Pancreas (tissue), 10 donors: ENCODE measurements at regions of chr3 and their contacts with region 1.

Region 1: GRCh38 chr3:143885780-143886427 is 37.6 kb upstream of the SLC9A9 start:
- DNase-seq: peak in 1 of 6 donors; percentile 25
- ATAC-seq: peak in 3 of 4 donors; percentile 73 to 78 (median 78)
- H3K4me3 ChIP-seq: no peak overlapping the region
- H3K27ac ChIP-seq: no peak overlapping the region
- H3K4me1 ChIP-seq: no peaks in the 10 kb centered on the region
- H3K27me3 ChIP-seq: no peaks in the 10 kb centered on the region
- CTCF ChIP-seq: peak; percentile 29 to 60 (median 53)

Region 2: GRCh38 chr3:143608966-143609365 is 276.9 kb before region 1 on chr3:
- intact Hi-C with region 1: no loop called
- DNase-seq: no peak
- ATAC-seq: peak in 1 of 4 donors; percentile 26
- H3K4me3 ChIP-seq: no peak overlapping the region
- H3K27ac ChIP-seq: no peak overlapping the region
- H3K4me1 ChIP-seq: no peaks in the 10 kb centered on the region
- H3K27me3 ChIP-seq: no peaks in the 10 kb centered on the region
- CTCF ChIP-seq: no peak

Region 3: DNA sequence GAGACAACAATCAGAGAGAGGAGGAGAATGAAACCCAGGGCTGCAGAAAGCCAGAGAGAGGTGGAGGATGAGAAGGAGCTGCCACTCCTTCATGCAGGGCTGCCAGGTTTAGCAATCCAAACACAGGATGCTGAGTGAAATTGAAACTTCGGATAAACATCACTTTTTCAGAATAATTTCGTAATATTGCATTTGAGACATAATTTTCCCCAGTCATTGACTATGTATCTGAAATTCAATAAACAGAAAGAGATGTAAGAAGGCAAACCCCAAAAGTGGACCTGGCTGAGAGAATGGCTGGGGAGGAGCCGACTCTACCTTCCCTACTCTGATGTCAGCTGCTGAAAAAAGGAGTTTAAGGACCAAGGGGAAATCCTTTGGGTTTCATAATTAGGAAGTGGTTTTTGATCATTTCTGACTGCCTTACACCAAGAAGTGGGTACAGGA is 71.4 kb before region 1 on chr3:
- intact Hi-C with region 1: no loop called
- DNase-seq: no peak
- ATAC-seq: no peak
- H3K4me3 ChIP-seq: no peak overlapping the region
- H3K27ac ChIP-seq: no peak overlapping the region
- H3K4me1 ChIP-seq: no peaks in the 10 kb centered on the region
- H3K27me3 ChIP-seq: no peaks in the 10 kb centered on the region
- CTCF ChIP-seq: no peak

Region 4: GRCh38 chr3:144770915-144771351 is 885.0 kb after region 1 on chr3:
- intact Hi-C with region 1: loop called in 1 of 3 experiments (anchors 10 kb)
- DNase-seq: no peak
- ATAC-seq: peak in 3 of 4 donors; percentile 78 to 85 (median 79)
- H3K4me3 ChIP-seq: no peak overlapping the region
- H3K27ac ChIP-seq: no peak overlapping the region
- H3K4me1 ChIP-seq: no peaks in the 10 kb centered on the region
- H3K27me3 ChIP-seq: no peaks in the 10 kb centered on the region
- CTCF ChIP-seq: peak in 1 of 4 donors; percentile 21